ENCODE measurements at regions of chr17 and their contacts with region 1.

Region 1: DNA sequence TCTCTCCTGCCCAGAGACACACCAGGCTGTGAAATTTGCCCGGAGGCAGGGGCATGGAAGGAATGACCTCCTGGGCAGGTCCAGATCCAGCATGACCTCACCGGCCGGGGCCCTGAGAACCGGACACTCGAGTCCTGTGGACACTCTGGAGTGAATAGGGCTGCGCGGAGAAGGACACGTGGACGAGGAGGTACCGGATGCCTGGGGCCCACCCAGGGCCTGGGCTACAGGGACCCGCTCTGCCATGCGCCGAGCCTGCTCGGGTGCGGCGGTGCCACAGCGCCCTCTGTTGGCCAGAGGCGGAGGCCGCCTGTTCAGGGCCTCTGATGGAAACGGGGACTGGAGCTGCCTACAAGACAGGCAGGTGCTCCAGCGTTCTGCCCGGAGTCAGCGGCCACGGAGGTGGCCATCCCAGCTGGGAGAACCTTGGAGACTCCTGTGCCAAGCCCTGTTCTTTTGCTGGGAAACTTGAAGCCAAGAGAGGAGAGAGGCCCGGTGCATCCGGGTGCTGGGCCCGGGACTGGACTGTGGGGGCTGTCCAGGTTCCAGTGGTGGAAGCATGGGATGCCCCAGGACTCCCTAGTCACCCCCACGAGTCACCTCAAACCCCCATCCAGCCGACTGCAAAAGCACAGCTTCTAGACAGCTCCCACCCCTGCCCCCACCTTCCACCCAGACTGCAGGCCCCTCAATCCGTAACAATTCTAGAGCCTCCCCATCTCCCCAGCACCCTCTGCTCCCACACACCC is 19.3 kb upstream of the NXPH3 start:
- DNase-seq: peak; percentile 49
- ATAC-seq: peak; percentile 98
- H3K4me3 ChIP-seq: no peak overlapping the region
- H3K27ac ChIP-seq: no peak overlapping the region
- H3K4me1 ChIP-seq: peaks cover 2% of the 10 kb centered on the region; the same call in 1 of the 2 replicates
- H3K27me3 ChIP-seq: peaks cover 23% of the 10 kb centered on the region
- CTCF ChIP-seq: peak; percentile 96
- POLR2A ChIP-seq: no peak
- RAD21 ChIP-seq: peak; percentile 93

Region 2: DNA sequence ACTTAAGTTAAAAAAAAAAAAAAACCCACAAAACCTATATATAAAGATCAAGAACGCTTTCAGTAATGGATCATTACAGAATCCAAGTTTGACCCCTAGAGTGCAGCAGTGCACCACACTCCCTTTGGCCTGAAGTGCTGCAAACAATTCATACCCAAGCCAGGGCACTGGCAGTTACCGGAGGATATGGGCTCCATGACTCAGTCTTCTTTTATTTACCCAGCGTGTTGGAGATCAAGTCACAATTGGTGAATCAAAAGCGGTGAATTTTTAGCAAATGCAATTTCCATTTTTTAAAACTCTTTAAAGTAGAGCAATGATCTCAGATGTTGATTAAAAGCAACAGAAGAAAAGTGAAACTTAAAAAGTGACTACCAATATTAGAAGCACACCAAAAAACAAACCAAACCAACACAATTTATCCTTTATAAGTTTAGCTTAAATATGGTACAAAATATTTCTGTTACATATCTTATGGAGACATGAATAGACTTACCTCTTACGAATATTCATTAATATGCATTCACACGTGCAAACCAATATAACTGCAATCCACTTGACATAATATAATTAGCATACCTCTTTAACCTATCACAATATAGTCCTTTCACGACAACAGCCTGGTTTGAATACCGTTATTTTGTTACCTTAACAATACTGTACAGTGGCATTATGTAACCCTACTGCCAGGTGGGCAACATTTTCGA is 240.7 kb before region 1 on chr17:
- CTCF ChIA-PET with region 1: no interaction called
- POLR2A ChIA-PET with region 1: no interaction called
- dilution Hi-C with region 1: no loop called
- in situ Hi-C with region 1: no loop called
- intact Hi-C with region 1: loop called (anchors 1 kb)
- DNase-seq: peak; percentile 91
- ATAC-seq: peak; percentile 99
- H3K4me3 ChIP-seq: no peak overlapping the region
- H3K27ac ChIP-seq: no peak overlapping the region
- H3K4me1 ChIP-seq: peaks cover 3% of the 10 kb centered on the region; the same call in 1 of the 2 replicates
- H3K27me3 ChIP-seq: no peaks in the 10 kb centered on the region
- CTCF ChIP-seq: peak; percentile 97
- POLR2A ChIP-seq: peak; percentile 60; the same call in 1 of the 2 replicates
- RAD21 ChIP-seq: peak; percentile 99

Region 3: DNA sequence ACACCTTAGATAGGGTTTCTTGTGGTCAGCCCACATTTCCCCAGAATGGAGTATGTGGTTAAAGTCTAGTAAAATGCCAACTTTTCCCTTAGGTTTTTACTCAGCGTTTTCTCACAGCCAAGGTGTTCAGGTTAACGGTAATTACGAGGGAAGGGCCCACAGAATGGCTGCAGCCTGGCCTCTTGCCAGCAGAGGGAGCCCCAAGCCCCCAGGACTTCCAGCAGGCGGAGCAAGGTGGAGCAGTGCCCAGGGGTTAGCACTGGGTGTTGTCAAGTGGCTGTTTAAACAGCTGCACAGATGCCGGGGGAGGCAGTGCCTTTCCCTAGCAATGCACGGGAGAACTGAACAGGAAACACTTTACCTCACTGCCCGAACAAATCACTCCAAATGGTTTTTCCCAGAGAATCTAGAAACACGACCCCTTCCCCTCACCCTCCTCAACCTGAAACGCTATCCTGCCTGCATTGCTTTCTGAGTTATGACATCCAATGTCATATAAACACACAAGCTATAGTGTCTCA is 148.4 kb before region 1 on chr17:
- CTCF ChIA-PET with region 1: interaction called, 5 read pairs
- POLR2A ChIA-PET with region 1: no interaction called
- dilution Hi-C with region 1: no loop called
- in situ Hi-C with region 1: no loop called
- intact Hi-C with region 1: loop called (anchors 1 kb)
- DNase-seq: peak; percentile 56
- ATAC-seq: peak; percentile 95
- H3K4me3 ChIP-seq: no peak overlapping the region
- H3K27ac ChIP-seq: no peak overlapping the region
- H3K4me1 ChIP-seq: no peaks in the 10 kb centered on the region
- H3K27me3 ChIP-seq: no peaks in the 10 kb centered on the region
- CTCF ChIP-seq: peak; percentile 65
- POLR2A ChIP-seq: no peak
- RAD21 ChIP-seq: peak; percentile 62

Region 4: GRCh38 chr17:49414622-49415350 is 141.6 kb before region 1 on chr17 and contains the start of gene PHB1:
- CTCF ChIA-PET with region 1: interaction called, 5 read pairs
- POLR2A ChIA-PET with region 1: no interaction called
- dilution Hi-C with region 1: no loop called
- in situ Hi-C with region 1: no loop called
- intact Hi-C with region 1: loop called (anchors 2 kb)
- DNase-seq: peak; percentile 97
- ATAC-seq: peak; percentile 100
- H3K4me3 ChIP-seq: peak within 1 kb of the TSS; percentile 72
- H3K27ac ChIP-seq: peak within 1 kb of the TSS; percentile 41; the same call in 1 of the 2 replicates
- H3K4me1 ChIP-seq: no peaks in the 10 kb centered on the region
- H3K27me3 ChIP-seq: no peaks in the 10 kb centered on the region
- CTCF ChIP-seq: no peak
- POLR2A ChIP-seq: no peak
- RAD21 ChIP-seq: no peak
- total RNA-seq, gene PHB1: 283 and 304 TPM in 2 replicates

Region 5: GRCh38 chr17:49434821-49435670 is 121.4 kb before region 1 on chr17:
- CTCF ChIA-PET with region 1: interaction called, 23 read pairs
- POLR2A ChIA-PET with region 1: no interaction called
- dilution Hi-C with region 1: no loop called
- in situ Hi-C with region 1: loop called (anchors 5 kb)
- intact Hi-C with region 1: loop called (anchors 1 kb)
- DNase-seq: peak; percentile 41
- ATAC-seq: peak; percentile 93
- H3K4me3 ChIP-seq: no peak overlapping the region
- H3K27ac ChIP-seq: no peak overlapping the region
- H3K4me1 ChIP-seq: peaks cover 3% of the 10 kb centered on the region; the same call in 1 of the 2 replicates
- H3K27me3 ChIP-seq: peaks cover 44% of the 10 kb centered on the region
- CTCF ChIP-seq: peak; percentile 67
- POLR2A ChIP-seq: no peak
- RAD21 ChIP-seq: peak; percentile 77

Region 6: DNA sequence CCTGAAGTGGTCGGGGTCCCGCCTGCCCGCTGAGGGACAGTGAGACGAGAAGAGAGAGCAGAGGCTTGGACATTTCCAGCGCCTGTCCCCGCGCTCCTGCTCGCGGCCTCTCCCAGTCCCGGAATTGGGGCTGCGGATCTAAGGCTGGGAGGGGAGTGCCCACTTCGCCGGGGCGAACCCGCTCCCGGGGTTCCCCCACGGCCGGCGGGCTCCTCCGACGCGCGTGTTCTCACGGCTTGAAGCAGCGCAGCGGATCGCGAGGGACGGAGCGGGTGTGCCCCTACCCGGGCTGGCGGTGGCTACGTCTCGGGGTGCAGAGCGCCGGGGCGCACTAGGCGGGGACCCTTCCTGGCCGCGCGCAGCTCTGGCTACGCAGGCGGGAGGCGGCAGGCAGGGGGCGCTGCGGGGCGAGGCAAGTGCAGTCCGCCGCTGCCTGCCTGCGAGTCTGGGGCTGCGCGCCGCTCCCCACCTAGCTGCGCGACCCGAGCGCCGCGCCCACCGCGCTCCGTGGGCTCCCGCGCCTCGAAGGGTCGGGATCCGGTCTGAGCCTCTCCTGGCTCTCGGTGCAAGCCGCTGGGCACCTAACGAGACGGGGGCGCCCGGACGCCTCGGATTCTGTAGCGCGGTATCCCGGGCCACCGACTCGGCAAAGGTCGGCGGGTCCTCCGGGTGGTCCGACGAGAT is 60.1 kb before region 1 on chr17:
- CTCF ChIA-PET with region 1: interaction called, 3 read pairs
- POLR2A ChIA-PET with region 1: no interaction called
- dilution Hi-C with region 1: no loop called
- in situ Hi-C with region 1: no loop called
- intact Hi-C with region 1: loop called (anchors 1 kb)
- DNase-seq: peak; percentile 28
- ATAC-seq: peak; percentile 85
- H3K4me3 ChIP-seq: no peak overlapping the region; the same call in 1 of the 2 replicates
- H3K27ac ChIP-seq: no peak overlapping the region
- H3K4me1 ChIP-seq: peaks cover 7% of the 10 kb centered on the region; the same call in 1 of the 2 replicates
- H3K27me3 ChIP-seq: peaks cover 85% of the 10 kb centered on the region
- CTCF ChIP-seq: peak; percentile 61
- POLR2A ChIP-seq: no peak
- RAD21 ChIP-seq: peak; percentile 49; the same call in 1 of the 2 replicates

Region 7: GRCh38 chr17:49528966-49529365 is 27.4 kb before region 1 on chr17:
- CTCF ChIA-PET with region 1: interaction called, 11 read pairs
- POLR2A ChIA-PET with region 1: no interaction called
- dilution Hi-C with region 1: no loop called
- in situ Hi-C with region 1: no loop called
- intact Hi-C with region 1: no loop called
- DNase-seq: no peak
- ATAC-seq: no peak
- H3K4me3 ChIP-seq: no peak overlapping the region
- H3K27ac ChIP-seq: no peak overlapping the region
- H3K4me1 ChIP-seq: no peaks in the 10 kb centered on the region
- H3K27me3 ChIP-seq: peaks cover 65% of the 10 kb centered on the region
- CTCF ChIP-seq: no peak
- POLR2A ChIP-seq: no peak
- RAD21 ChIP-seq: no peak

Region 8: DNA sequence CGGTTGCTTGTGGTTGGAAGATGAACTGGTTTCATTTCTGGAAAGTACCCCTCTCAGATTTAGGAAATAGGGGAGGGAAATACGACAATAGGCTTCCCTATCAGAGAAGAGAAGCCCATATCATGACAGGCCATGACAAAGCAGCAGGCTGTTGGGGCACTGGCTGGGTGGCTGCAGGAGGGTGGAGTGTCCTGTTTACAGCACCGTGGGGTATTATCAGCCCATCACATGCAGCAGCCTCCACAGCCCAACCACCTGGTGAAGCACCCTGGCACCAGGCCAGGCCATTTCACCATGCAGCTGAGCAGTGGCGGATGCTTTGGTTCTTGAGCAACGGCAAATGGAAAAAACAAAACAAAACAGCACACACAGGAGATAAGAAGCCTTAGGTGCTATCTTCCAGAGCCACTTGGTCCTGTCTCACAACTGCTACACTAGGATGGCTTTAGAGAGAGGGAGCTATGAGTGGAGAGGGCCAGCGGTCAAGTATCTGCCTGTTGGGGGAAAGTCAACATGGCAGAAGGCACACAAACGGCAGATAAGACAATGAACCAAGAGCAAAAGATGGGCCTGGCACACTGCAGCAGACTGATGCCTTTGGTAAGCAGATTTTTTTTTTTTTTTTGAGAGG is 183.4 kb after region 1 on chr17:
- CTCF ChIA-PET with region 1: no interaction called
- POLR2A ChIA-PET with region 1: no interaction called
- dilution Hi-C with region 1: no loop called
- in situ Hi-C with region 1: no loop called
- intact Hi-C with region 1: no loop called
- DNase-seq: peak; percentile 16
- ATAC-seq: no peak
- H3K4me3 ChIP-seq: no peak overlapping the region
- H3K27ac ChIP-seq: no peak overlapping the region
- H3K4me1 ChIP-seq: peaks cover 4% of the 10 kb centered on the region
- H3K27me3 ChIP-seq: peaks cover 10% of the 10 kb centered on the region
- CTCF ChIP-seq: no peak
- POLR2A ChIP-seq: no peak
- RAD21 ChIP-seq: no peak